Aorta (tissue), 5 donors: ENCODE measurements at regions of chr19 and their contacts with region 1.

Region 1: DNA sequence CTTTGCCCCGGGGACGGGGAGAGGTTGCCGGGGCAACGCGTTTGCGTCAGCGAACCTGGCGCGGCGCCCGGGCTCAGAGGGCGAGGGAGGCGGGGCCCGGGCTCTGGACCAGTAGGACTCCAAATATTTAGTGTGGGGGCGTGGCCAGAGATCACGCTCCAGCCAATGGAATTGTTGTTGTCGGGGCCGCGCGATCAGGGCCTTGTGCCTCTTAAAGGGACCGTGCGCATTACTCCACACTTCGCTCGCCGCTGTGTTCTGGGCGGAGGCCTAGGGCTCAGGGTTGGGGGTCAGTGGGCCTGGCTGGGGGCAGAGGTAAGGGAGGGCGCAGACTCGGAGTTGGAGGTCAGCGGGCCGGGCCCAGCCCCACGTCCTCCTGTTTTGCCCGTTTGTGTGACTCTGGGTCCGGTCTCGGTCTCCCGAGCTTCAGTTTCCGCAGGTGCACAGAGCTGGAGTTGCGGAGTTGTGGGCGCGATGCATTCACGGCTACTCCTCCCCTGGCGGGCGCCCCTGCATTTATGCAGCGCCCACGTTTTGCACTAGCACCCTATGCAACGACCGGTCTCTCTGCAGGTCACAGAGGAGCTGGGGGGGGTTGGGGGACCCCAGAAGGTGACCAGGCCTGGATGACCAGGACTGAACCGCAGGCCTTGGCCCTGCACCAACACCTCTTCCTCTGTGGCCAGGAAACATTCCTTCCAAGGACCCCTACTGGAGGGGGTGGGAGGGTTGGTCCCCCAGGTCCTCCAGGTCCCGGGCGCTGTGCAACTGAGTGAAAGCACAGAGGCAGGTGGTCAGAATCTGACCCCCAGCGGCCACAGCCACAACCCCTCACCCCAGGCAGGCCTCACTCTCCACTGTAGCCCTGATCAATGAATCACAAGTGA is 10.7 kb upstream of the MKNK2 start:
- DNase-seq: peak; percentile 99
- ATAC-seq: peak; percentile 92
- H3K4me3 ChIP-seq: peak overlapping the region; percentile 8 to 69
- H3K27ac ChIP-seq: peak overlapping the region in 1 of 2 donors; percentile 92
- H3K4me1 ChIP-seq: no peaks in the 10 kb centered on the region
- H3K27me3 ChIP-seq: no peaks in the 10 kb centered on the region

Region 2: GRCh38 chr19:728011-728410 is 1333.7 kb before region 1 on chr19:
- intact Hi-C with region 1: no loop called
- DNase-seq: no peak
- ATAC-seq: peak; percentile 59
- H3K4me3 ChIP-seq: no peak overlapping the region
- H3K27ac ChIP-seq: no peak overlapping the region
- H3K4me1 ChIP-seq: no peaks in the 10 kb centered on the region
- H3K27me3 ChIP-seq: no peaks in the 10 kb centered on the region

Region 3: DNA sequence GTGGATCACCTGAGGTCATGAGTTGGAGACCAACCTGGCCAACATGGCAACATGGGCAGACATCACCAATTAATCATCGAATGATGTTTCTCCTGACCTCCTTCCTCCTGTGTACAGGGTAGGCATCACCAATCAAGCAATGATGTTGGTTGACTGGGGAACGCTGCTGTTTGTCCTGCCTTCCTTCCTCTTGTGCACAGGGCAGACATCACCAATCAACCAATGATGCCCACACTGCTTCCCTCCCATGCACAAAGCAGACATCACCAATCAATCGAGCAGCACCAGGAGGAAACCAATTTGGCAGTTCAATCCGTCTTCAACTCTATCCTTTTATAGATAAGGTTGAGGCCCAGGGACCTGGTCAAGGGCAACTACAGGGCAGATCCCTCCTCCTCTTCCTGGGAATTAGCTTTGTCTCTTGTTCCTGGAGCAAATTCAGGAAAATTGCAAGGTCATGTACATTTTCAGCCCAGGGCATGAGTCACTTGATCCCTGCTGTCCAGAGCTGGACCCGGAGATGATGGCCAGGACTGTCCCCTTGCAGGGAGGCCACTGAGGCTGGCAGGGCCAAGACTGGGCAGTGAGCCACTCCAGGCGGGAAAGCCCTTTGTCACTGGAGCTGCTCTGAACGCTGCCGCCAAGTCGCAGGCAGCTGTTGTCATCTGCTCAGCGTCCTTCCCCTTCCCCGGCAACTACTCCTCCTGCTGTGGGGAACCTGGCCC is 126.1 kb before region 1 on chr19:
- intact Hi-C with region 1: loop called in 1 of 2 experiments (anchors 10 kb)
- DNase-seq: peak in 1 of 2 donors; percentile 66
- ATAC-seq: no peak
- H3K4me3 ChIP-seq: no peak overlapping the region
- H3K27ac ChIP-seq: no peak overlapping the region
- H3K4me1 ChIP-seq: no peaks in the 10 kb centered on the region
- H3K27me3 ChIP-seq: no peaks in the 10 kb centered on the region